Psoas muscle (tissue), 8 donors: ENCODE measurements at regions of chr1 and their contacts with region 1.

Region 1: GRCh38 chr1:232950197-232951176 is at the start of gene NTPCR:
- DNase-seq: peak; percentile 94 to 97
- ATAC-seq: peak; percentile 95 to 98 (median 95)
- H3K4me3 ChIP-seq: peak within 1 kb of the TSS; percentile 94
- H3K27ac ChIP-seq: peak within 1 kb of the TSS; percentile 93
- H3K4me1 ChIP-seq: peaks cover 19% of the 10 kb centered on the region
- H3K27me3 ChIP-seq: no peaks in the 10 kb centered on the region
- CTCF ChIP-seq: no peak
- total RNA-seq, gene NTPCR: 37.2 to 72.0 (median 62.2) TPM

Region 2: GRCh38 chr1:232574889-232575762 is 375.4 kb before region 1 on chr1:
- intact Hi-C with region 1: no loop called
- DNase-seq: no peak
- ATAC-seq: no peak
- H3K4me3 ChIP-seq: no peak overlapping the region
- H3K27ac ChIP-seq: no peak overlapping the region
- H3K4me1 ChIP-seq: peaks cover 3% of the 10 kb centered on the region
- H3K27me3 ChIP-seq: no peaks in the 10 kb centered on the region
- CTCF ChIP-seq: no peak

Region 3: GRCh38 chr1:232805269-232806185 is 145.0 kb before region 1 on chr1 and contains the start of gene MAP10:
- intact Hi-C with region 1: loop called in 1 of 2 experiments (anchors 5 kb)
- DNase-seq: peak; percentile 80 to 90
- ATAC-seq: peak; percentile 86 to 89 (median 87)
- H3K4me3 ChIP-seq: peak within 1 kb of the TSS; percentile 90
- H3K27ac ChIP-seq: peak within 1 kb of the TSS; percentile 93
- H3K4me1 ChIP-seq: peaks cover 28% of the 10 kb centered on the region
- H3K27me3 ChIP-seq: no peaks in the 10 kb centered on the region
- CTCF ChIP-seq: no peak
- total RNA-seq, gene MAP10: 1.3 to 4.0 (median 2.2) TPM

Region 4: GRCh38 chr1:232968965-232969364 is 18.5 kb after region 1 on chr1:
- intact Hi-C with region 1: no loop called
- DNase-seq: peak; percentile 66 to 89
- ATAC-seq: peak; percentile 92 to 95 (median 94)
- H3K4me3 ChIP-seq: no peak overlapping the region
- H3K27ac ChIP-seq: peak overlapping the region; percentile 72
- H3K4me1 ChIP-seq: peaks cover 40% of the 10 kb centered on the region
- H3K27me3 ChIP-seq: no peaks in the 10 kb centered on the region
- CTCF ChIP-seq: no peak